PC-3 (cell line): ENCODE measurements at regions of chr5 and their contacts with region 1.

Region 1: DNA sequence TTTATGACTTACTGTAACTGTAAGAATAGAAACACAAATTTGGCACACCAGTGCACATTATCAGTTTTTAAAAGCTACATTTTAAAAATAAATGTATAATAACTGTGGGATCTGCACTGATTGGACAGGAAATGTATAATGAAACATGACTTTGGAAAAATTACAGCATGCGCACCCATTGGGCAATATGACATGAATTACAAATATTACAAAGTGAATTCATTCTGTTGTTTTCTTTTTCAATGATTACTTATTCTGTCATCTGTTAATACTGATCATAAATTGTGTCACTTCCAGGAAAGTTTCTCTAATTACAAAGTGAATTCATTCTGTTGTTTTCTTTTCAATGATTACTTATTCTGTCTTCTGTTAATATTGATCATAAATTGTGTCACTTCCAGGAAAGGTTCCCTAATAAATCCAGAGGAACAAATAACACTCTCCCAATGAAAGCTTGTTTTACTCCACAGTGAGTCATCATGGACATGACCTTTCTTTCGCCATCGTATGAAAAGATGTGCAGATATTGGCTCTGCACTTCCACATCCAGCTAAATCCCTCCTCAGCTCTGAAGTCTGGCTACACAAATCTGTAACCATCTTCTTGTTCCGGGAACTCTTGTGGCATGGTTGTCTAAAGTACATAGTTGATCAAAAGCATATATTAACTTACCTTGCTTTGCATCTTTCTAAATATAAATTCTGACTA is 297.0 kb upstream of the HAPLN1 start:
- DNase-seq: peak; percentile 76
- ATAC-seq: peak; percentile 76
- H3K4me3 ChIP-seq: no peak overlapping the region
- H3K27ac ChIP-seq: peak overlapping the region; percentile 95
- H3K4me1 ChIP-seq: peaks cover 42% of the 10 kb centered on the region
- H3K27me3 ChIP-seq: no peaks in the 10 kb centered on the region
- CTCF ChIP-seq: no peak

Region 2: DNA sequence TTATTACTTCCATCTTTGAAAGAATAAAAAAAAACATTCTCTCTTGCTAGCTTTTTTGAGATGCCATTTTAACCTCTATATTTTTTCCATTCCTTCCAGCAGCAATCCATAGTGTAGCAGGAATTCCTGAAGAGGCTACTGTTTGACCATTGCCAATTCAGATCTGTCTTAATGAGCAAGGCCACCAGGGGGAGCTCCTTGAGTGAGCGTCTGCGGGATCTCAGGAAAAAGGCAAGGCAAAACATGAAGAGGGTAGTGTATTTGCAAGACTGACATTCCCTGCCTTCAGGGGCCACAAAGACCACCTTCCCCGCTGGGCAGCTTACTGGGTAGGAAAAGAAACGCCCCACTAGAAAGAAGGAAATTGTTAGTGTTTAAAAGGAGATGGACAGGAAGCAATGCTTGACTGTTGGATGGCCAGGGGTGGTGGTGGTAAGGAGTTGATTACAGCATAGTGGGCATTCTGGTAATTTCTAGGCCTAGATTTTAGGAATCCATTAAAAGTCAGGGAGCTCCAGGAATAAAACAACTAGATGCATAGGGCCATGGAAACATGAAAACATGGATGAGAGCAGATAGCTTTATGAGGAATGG is 90.4 kb before region 1 on chr5:
- CTCF ChIA-PET with region 1: no interaction called
- POLR2A ChIA-PET with region 1: no interaction called
- intact Hi-C with region 1: loop called (anchors 5 kb)
- DNase-seq: peak; percentile 79
- ATAC-seq: peak; percentile 31; the same call in 1 of the 2 replicates
- H3K4me3 ChIP-seq: no peak overlapping the region
- H3K27ac ChIP-seq: no peak overlapping the region
- H3K4me1 ChIP-seq: peaks cover 6% of the 10 kb centered on the region; the same call in 1 of the 2 replicates
- H3K27me3 ChIP-seq: no peaks in the 10 kb centered on the region
- CTCF ChIP-seq: peak; percentile 86

Region 3: GRCh38 chr5:84032324-84032723 is 14.6 kb after region 1 on chr5:
- CTCF ChIA-PET with region 1: no interaction called
- POLR2A ChIA-PET with region 1: no interaction called
- intact Hi-C with region 1: loop called (anchors 1 kb)
- DNase-seq: peak; percentile 68
- ATAC-seq: peak; percentile 82
- H3K4me3 ChIP-seq: no peak overlapping the region
- H3K27ac ChIP-seq: peak overlapping the region; percentile 90
- H3K4me1 ChIP-seq: peaks cover 34% of the 10 kb centered on the region
- H3K27me3 ChIP-seq: no peaks in the 10 kb centered on the region
- CTCF ChIP-seq: no peak

Region 4: DNA sequence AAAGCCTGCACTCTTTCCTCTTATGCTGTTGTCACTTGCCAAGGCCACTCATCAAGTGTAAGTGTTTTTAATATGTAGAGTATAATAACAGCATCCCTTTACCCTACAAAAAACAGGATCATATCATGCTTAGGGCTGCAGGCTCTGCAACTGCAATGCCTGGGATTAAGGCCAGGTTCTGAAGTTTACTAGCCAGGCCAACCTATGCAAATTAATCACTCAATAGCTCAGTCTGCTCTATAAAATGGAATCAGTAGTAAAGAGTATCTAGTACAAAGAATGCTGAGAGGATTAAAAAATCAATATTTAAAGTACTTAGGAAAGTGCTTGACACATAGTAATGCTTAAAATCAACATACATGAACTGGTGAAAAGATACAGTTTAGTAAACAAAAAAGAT is 113.7 kb after region 1 on chr5:
- CTCF ChIA-PET with region 1: no interaction called
- POLR2A ChIA-PET with region 1: no interaction called
- intact Hi-C with region 1: loop called (anchors 5 kb)
- DNase-seq: peak; percentile 50
- ATAC-seq: peak; percentile 90
- H3K4me3 ChIP-seq: no peak overlapping the region
- H3K27ac ChIP-seq: peak overlapping the region; percentile 25; the same call in 1 of the 2 replicates
- H3K4me1 ChIP-seq: peaks cover 24% of the 10 kb centered on the region
- H3K27me3 ChIP-seq: no peaks in the 10 kb centered on the region
- CTCF ChIP-seq: no peak

Region 5: GRCh38 chr5:84382363-84383295 is 365.0 kb after region 1 on chr5:
- CTCF ChIA-PET with region 1: no interaction called
- POLR2A ChIA-PET with region 1: no interaction called
- intact Hi-C with region 1: loop called (anchors 2 kb)
- DNase-seq: no peak
- ATAC-seq: peak; percentile 8
- H3K4me3 ChIP-seq: peak overlapping the region; percentile 77
- H3K27ac ChIP-seq: peak overlapping the region; percentile 46
- H3K4me1 ChIP-seq: peaks cover 15% of the 10 kb centered on the region
- H3K27me3 ChIP-seq: no peaks in the 10 kb centered on the region
- CTCF ChIP-seq: no peak